WTC11 (cell line): ENCODE measurements at regions of chr16 and their contacts with region 1.

Region 1: DNA sequence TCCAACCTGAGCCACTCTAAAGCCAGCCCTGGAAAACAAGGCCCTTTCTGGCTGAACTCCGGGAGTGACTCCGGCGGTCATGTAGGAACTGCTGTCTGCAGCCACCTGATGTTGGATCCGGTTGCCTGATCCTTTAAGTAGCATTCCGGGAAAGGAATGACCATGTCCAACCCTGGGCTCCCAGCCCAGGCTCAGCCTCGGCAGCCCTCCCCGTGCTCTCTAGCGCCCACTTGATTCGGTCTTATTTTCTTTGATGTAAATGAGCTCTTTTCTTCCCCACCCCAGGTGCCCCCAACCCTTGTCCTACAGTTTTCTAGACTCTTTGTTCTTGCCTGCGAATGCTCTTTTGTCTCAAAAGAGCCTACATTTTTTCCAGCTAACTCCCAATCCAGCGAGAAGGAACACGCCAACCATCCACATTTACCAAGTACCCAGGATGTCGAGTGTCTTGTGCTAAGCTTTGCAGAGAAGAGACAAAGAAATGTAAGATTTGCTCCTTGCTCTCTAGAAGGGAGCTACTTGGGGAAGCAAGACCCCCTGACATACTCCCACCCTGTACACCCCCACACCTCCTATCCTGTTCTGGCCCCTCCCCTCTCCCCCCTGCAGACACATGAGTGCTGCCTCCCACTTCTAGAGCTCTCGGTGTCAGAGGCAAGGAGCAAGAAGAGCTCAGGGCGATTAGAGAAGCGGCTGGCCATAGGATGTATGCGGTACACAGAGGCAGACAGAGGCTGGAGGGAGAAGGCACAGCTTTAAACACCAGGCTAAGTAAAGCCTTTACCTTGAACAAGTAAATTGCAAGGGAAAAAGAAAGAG is 53.8 kb downstream of the COG7 start:
- DNase-seq: peak; percentile 82
- ATAC-seq: peak; percentile 95
- H3K4me3 Mint-ChIP-seq: peak overlapping the region; percentile 48
- H3K27ac Mint-ChIP-seq: peak overlapping the region; percentile 89
- H3K4me1 Mint-ChIP-seq: peaks cover 33% of the 10 kb centered on the region
- H3K27me3 Mint-ChIP-seq: no peaks in the 10 kb centered on the region
- CTCF ChIP-seq: no peak

Region 2: DNA sequence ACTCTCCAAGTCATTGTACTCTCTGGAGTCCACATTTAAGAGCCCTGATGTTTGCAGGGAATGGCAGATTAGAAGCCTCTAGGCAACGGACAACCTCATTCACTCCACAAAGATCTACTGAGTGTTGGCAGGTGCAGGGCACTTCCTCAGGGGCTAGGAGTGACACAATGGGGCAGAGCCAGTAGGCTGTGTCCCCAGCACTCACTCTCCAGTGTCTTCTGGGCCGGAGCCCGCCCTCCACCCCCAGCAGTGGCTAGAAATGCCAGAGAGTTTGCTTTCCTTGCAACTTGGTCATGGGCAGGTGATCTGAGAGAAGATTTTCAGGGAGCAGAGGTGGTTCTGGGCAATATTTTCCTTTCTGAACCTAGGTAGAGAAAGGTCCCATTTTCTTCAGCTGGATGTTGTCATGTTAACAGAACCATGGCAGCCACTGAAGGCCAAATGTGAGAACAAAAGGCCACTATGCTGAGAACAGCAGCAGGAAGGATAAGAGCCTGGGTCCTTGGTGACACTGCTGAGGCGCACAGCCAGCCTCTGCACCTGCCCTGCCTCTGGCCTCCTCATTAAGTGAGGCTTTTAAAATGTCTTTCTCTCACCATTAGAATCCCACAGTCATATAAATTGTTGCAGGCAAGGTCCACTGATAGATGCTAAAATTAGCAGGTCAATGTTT is 346.2 kb before region 1 on chr16:
- CTCF ChIA-PET with region 1: no interaction called
- POLR2A ChIA-PET with region 1: no interaction called
- DNase-seq: no peak
- ATAC-seq: no peak
- H3K4me3 Mint-ChIP-seq: no peak overlapping the region
- H3K27ac Mint-ChIP-seq: no peak overlapping the region
- H3K4me1 Mint-ChIP-seq: no peaks in the 10 kb centered on the region
- H3K27me3 Mint-ChIP-seq: no peaks in the 10 kb centered on the region; the same call in 1 of the 2 replicates
- CTCF ChIP-seq: no peak

Region 3: GRCh38 chr16:23182460-23183309 is 216.5 kb before region 1 on chr16 and contains the start of gene SCNN1G:
- CTCF ChIA-PET with region 1: interaction called, 16 read pairs
- POLR2A ChIA-PET with region 1: no interaction called
- DNase-seq: peak; percentile 94
- ATAC-seq: peak; percentile 90
- H3K4me3 Mint-ChIP-seq: peak within 1 kb of the TSS; percentile 75
- H3K27ac Mint-ChIP-seq: no peak within 1 kb of the TSS
- H3K4me1 Mint-ChIP-seq: peaks cover 16% of the 10 kb centered on the region
- H3K27me3 Mint-ChIP-seq: peaks cover 47% of the 10 kb centered on the region
- CTCF ChIP-seq: peak; percentile 80
- total RNA-seq, gene SCNN1G: 0.78 to 1.3 TPM (median 0.80 TPM) in 3 replicates

Region 4: DNA sequence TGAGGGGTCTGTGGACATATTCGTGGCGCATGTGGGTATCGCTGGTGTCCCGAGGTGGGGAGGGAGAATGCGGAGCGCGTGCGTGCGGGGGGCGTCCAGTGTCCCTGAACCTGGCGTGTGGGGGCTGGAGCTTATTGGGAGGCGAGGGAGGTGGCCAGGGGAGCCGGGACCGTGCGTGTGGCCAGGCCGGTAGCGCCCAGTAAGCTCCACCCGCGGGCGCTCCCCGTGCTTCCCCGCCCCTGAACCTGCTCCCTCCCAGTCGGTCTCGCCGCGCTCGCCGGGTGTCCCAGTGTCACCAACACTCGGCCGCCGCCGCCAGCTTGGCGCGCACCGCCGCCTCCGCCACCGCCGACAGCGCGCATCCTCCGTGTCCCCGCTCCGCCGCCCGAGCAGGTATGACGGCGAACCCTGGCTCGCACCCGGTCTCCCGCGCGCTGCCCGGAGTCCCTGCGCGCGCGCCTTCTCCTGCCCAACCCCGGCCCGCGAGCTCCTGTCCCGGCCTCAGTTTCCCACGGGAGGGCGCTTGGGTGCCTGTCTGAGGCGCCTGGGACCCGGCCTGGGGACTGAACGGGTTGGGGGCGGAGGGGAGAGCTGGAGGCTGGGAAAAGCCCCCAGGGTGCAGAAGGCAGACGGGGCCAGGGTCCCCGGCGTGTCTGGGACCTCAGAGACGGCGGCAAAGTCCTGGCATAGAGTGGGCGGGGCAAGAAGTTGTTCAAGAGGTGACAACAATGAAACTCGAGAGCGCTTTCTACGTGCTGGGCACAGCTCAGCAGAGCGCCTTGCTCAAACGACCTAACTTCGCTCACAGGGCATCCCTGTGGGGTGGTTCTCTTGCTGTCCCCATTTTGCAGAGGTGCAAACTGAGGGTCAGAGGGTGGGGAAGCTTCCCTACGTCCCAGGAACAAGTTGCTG is 96.9 kb before region 1 on chr16 and contains the start of gene SCNN1B:
- CTCF ChIA-PET with region 1: interaction called, 21 read pairs
- POLR2A ChIA-PET with region 1: interaction called, 3 read pairs
- DNase-seq: peak; percentile 58
- ATAC-seq: peak; percentile 62
- H3K4me3 Mint-ChIP-seq: peak within 1 kb of the TSS; percentile 90
- H3K27ac Mint-ChIP-seq: no peak within 1 kb of the TSS; the same call in 1 of the 2 replicates
- H3K4me1 Mint-ChIP-seq: peaks cover 12% of the 10 kb centered on the region
- H3K27me3 Mint-ChIP-seq: peaks cover 46% of the 10 kb centered on the region
- CTCF ChIP-seq: no peak
- total RNA-seq, gene SCNN1B: 3.4 to 4.8 TPM (median 3.6 TPM) in 3 replicates

Region 5: GRCh38 chr16:23348579-23349469 is 50.4 kb before region 1 on chr16:
- CTCF ChIA-PET with region 1: interaction called, 10 read pairs
- POLR2A ChIA-PET with region 1: no interaction called
- DNase-seq: peak; percentile 71
- ATAC-seq: peak; percentile 91
- H3K4me3 Mint-ChIP-seq: no peak overlapping the region
- H3K27ac Mint-ChIP-seq: no peak overlapping the region
- H3K4me1 Mint-ChIP-seq: peaks cover 10% of the 10 kb centered on the region
- H3K27me3 Mint-ChIP-seq: no peaks in the 10 kb centered on the region; the same call in 1 of the 2 replicates
- CTCF ChIP-seq: peak; percentile 19; the same call in 1 of the 2 replicates

Region 6: DNA sequence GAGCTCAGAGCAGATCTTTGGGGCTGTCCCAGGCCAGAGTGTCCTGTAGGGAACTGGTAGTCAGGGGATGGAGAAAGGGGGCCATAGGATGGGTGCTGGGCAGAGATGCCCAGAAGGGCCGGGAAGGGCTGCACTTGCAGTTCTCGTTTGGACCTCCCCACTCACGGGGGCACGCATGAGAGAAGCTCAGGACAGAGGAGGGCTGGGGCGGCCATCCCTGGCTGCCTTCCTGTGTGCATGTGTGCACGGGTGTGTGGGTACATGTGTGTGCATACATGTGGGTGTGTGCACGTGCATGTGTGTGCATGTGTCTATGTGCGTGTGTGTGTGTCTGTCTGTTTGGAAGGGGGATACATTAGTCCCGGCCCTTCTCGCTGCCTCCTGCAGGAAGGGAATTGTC is 19.5 kb before region 1 on chr16:
- CTCF ChIA-PET with region 1: interaction called, 13 read pairs
- POLR2A ChIA-PET with region 1: no interaction called
- DNase-seq: no peak
- ATAC-seq: no peak
- H3K4me3 Mint-ChIP-seq: no peak overlapping the region
- H3K27ac Mint-ChIP-seq: no peak overlapping the region
- H3K4me1 Mint-ChIP-seq: no peaks in the 10 kb centered on the region
- H3K27me3 Mint-ChIP-seq: no peaks in the 10 kb centered on the region
- CTCF ChIP-seq: no peak

Region 7: DNA sequence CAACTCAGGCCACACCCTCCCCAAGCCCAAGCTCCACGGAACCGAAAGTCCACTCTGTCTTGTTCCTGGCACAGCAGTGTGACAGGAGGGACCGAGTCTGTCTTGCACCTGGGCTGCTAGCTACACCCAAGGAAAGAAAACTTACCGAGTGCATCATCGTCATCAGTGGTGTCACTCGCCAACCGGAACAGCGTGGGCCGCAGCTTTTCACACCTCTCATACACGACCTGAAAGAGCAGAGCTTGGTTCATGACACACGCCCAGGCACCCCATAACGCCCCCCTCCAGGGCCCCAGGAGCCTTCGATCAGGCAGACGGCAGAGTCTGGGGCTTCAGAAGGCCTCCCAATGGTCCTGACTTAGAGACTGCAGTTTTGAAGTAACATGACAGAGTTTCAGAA is 83.6 kb after region 1 on chr16:
- CTCF ChIA-PET with region 1: no interaction called
- POLR2A ChIA-PET with region 1: no interaction called
- DNase-seq: no peak
- ATAC-seq: no peak
- H3K4me3 Mint-ChIP-seq: no peak overlapping the region
- H3K27ac Mint-ChIP-seq: peak overlapping the region; percentile 3; the same call in 1 of the 2 replicates
- H3K4me1 Mint-ChIP-seq: no peaks in the 10 kb centered on the region
- H3K27me3 Mint-ChIP-seq: no peaks in the 10 kb centered on the region
- CTCF ChIP-seq: no peak

Region 8: DNA sequence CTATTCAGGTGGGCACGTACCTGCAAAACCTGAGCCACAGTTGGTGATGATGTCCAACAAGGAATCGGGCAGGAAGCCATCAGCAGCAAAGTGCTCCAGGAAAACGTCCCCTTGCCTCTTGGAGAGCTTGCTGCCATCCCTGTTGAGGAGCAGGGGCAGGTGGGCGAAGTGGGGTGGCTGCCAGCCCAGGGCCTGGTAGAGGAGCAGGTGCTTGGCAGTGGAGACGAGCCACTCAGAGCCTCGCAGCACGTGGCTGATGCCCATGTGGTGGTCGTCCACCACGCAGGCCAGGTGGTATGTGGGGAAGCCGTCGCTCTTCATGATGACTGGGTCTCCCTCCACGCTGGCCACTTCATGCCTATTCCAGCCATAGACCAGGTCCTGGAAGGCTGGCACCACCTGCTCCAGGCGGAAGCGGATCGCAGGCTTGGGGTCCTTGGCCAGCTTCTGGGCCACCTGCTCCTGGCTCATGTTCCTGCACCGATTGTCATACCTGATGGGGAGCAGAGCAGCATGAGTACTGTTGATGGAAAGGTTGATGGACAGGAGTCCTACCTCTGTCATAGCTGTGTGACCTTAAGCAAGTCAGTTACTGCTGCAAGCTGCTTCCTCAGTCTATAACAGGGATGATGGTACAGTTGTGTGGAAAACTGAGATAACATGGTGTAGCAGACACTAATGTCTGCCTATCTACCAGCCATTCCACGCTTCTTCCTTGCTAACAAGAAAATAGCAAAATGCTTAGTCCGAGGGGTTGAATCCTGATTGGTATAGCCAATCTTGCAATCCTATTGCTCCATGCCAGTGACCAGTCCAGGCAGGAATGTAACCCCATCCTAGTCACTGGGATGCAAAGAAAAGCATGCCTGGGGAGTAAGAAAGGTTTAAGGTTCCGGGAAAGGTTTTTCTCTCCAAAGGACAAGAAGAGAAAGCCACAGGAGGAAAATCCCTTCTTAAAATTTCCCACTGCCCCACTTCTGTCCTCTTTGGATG is 136.0 kb after region 1 on chr16:
- CTCF ChIA-PET with region 1: no interaction called
- POLR2A ChIA-PET with region 1: no interaction called
- DNase-seq: no peak
- ATAC-seq: no peak
- H3K4me3 Mint-ChIP-seq: no peak overlapping the region
- H3K27ac Mint-ChIP-seq: no peak overlapping the region
- H3K4me1 Mint-ChIP-seq: no peaks in the 10 kb centered on the region
- H3K27me3 Mint-ChIP-seq: no peaks in the 10 kb centered on the region
- CTCF ChIP-seq: no peak